ENCODE measurements at regions of chr5 and their contacts with region 1.

Region 1: GRCh38 chr5:96934708-96935558 is 947 bp upstream of the LNPEP start:
- DNase-seq: peak; percentile 95 to 98
- H3K4me3 ChIP-seq: peak overlapping the region; percentile 90
- H3K4me3 Mint-ChIP-seq: peak overlapping the region; percentile 97
- H3K27ac Mint-ChIP-seq: peak overlapping the region; percentile 97
- H3K4me1 ChIP-seq: peaks cover 13% of the 10 kb centered on the region; the same call in 1 of the 2 replicates
- H3K4me1 Mint-ChIP-seq: peaks cover 24% of the 10 kb centered on the region
- H3K27me3 ChIP-seq: no peaks in the 10 kb centered on the region
- H3K27me3 Mint-ChIP-seq: no peaks in the 10 kb centered on the region
- CTCF ChIP-seq: no peak

Region 2: GRCh38 chr5:95730730-95731570 is 1204.0 kb before region 1 on chr5 and contains the start of gene RHOBTB3:
- CTCF ChIA-PET with region 1: no interaction called
- POLR2A ChIA-PET with region 1: interaction called, 12 read pairs
- intact Hi-C with region 1: no loop called
- DNase-seq: peak; percentile 90 to 94
- H3K4me3 ChIP-seq: peak within 1 kb of the TSS; percentile 97
- H3K4me3 Mint-ChIP-seq: peak within 1 kb of the TSS; percentile 96
- H3K27ac Mint-ChIP-seq: peak within 1 kb of the TSS; percentile 94
- H3K4me1 ChIP-seq: peaks cover 55% of the 10 kb centered on the region
- H3K4me1 Mint-ChIP-seq: peaks cover 38% of the 10 kb centered on the region
- H3K27me3 ChIP-seq: no peaks in the 10 kb centered on the region
- H3K27me3 Mint-ChIP-seq: no peaks in the 10 kb centered on the region
- CTCF ChIP-seq: peak in 1 of 2 experiments; percentile 3
- total RNA-seq, gene RHOBTB3: 85.6 and 88.5 TPM in 2 replicates

Region 3: GRCh38 chr5:96752341-96753016 is 182.5 kb before region 1 on chr5:
- CTCF ChIA-PET with region 1: interaction called, 3 read pairs
- POLR2A ChIA-PET with region 1: no interaction called
- intact Hi-C with region 1: loop called (anchors 1 kb)
- DNase-seq: peak in 1 of 2 experiments; percentile 71
- H3K4me3 ChIP-seq: no peak overlapping the region
- H3K4me3 Mint-ChIP-seq: no peak overlapping the region
- H3K27ac Mint-ChIP-seq: no peak overlapping the region
- H3K4me1 ChIP-seq: no peaks in the 10 kb centered on the region
- H3K4me1 Mint-ChIP-seq: no peaks in the 10 kb centered on the region
- H3K27me3 ChIP-seq: no peaks in the 10 kb centered on the region
- H3K27me3 Mint-ChIP-seq: no peaks in the 10 kb centered on the region
- CTCF ChIP-seq: peak; percentile 61 to 70

Region 4: DNA sequence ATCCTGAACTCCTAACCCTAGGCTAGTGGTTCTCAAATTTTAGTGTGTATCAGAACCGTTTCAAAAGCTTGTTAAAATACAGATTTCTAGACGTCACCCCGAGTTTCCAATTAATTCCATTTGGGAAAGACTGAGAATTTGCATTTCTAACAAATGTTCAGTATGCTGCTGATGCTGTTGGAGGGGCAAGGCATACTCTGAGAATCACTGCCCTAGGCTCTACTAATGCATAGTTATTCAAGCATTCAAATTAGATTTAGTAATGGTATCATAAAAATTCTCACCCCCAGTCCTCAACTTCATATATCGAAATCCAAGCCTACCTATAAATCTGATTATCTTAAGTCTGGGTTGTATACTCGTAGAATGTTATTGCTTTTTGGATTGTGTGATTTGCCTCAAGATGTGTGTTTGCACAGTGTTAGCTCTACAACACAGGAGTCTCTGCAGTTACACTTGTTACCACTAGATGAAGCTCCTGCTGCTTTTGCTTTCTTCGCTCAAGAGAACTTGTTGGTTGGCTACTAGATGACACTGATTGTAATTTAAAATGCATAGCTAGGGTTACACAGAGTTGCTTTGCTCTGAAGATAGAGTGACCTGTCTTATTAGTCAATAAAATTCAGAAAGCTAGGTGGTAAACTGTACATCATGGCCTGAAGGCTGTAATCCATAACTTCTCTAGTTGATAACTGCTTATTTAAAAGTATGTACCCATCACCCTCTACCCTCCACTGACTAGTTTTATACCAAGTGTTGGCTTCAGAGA is 66.1 kb before region 1 on chr5:
- CTCF ChIA-PET with region 1: interaction called, 8 read pairs
- POLR2A ChIA-PET with region 1: no interaction called
- intact Hi-C with region 1: loop called (anchors 1 kb)
- DNase-seq: peak in 1 of 2 experiments; percentile 59
- H3K4me3 ChIP-seq: no peak overlapping the region
- H3K4me3 Mint-ChIP-seq: no peak overlapping the region
- H3K27ac Mint-ChIP-seq: no peak overlapping the region
- H3K4me1 ChIP-seq: peaks cover 4% of the 10 kb centered on the region; the same call in 1 of the 2 replicates
- H3K4me1 Mint-ChIP-seq: peaks cover 3% of the 10 kb centered on the region
- H3K27me3 ChIP-seq: no peaks in the 10 kb centered on the region
- H3K27me3 Mint-ChIP-seq: no peaks in the 10 kb centered on the region
- CTCF ChIP-seq: peak; percentile 91 to 96

Region 5: DNA sequence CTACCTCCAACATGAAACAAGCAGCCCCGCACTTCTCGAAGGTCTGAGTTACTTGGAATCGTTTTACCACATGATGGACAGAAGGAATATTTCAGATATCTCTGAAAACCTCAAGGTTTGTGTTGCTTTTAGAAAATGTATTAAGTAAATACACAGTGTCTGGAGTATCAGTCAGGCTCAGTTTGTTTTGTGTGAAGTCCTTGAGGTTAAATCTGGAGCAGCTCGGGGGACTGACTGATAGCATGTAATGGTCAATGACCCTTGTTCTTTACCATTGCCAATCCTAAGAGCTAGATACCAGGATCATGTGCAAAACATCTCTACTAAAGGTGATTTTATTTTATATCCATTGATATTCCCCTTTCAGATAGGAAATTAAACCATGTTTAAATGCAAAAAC is 25.9 kb before region 1 on chr5:
- CTCF ChIA-PET with region 1: no interaction called
- POLR2A ChIA-PET with region 1: no interaction called
- intact Hi-C with region 1: loop called (anchors 2 kb)
- DNase-seq: no peak
- H3K4me3 ChIP-seq: no peak overlapping the region
- H3K4me3 Mint-ChIP-seq: no peak overlapping the region
- H3K27ac Mint-ChIP-seq: no peak overlapping the region
- H3K4me1 ChIP-seq: peaks cover 18% of the 10 kb centered on the region; the same call in 1 of the 2 replicates
- H3K4me1 Mint-ChIP-seq: peaks cover 7% of the 10 kb centered on the region
- H3K27me3 ChIP-seq: no peaks in the 10 kb centered on the region
- H3K27me3 Mint-ChIP-seq: no peaks in the 10 kb centered on the region
- CTCF ChIP-seq: no peak

Region 6: GRCh38 chr5:96963267-96963666 is 28.3 kb after region 1 on chr5:
- CTCF ChIA-PET with region 1: no interaction called
- POLR2A ChIA-PET with region 1: no interaction called
- intact Hi-C with region 1: no loop called
- DNase-seq: no peak
- H3K4me3 ChIP-seq: no peak overlapping the region
- H3K4me3 Mint-ChIP-seq: no peak overlapping the region
- H3K27ac Mint-ChIP-seq: no peak overlapping the region
- H3K4me1 ChIP-seq: peaks cover 10% of the 10 kb centered on the region; the same call in 1 of the 2 replicates
- H3K4me1 Mint-ChIP-seq: peaks cover 7% of the 10 kb centered on the region
- H3K27me3 ChIP-seq: no peaks in the 10 kb centered on the region
- H3K27me3 Mint-ChIP-seq: no peaks in the 10 kb centered on the region
- CTCF ChIP-seq: no peak

Region 7: DNA sequence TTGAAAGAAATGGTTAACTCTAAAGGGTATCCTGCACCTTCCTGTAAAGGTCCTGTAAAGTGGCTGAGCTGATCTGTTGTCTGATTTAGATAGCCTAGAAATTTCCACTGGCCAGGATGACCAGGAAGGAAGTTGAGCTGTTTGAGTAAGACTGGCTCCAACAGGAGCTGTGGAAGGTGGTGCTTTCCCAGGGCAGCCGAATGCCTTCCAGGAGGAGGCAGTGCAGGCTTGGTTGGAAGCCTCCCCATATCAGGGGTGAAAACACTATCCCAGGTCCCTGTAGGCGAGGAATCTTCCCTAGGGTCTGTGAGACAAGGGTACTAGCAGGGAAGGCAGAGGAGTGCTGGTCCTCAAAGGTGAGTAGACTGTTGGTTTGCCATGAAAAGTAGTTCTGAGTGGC is 109.1 kb after region 1 on chr5:
- CTCF ChIA-PET with region 1: no interaction called
- POLR2A ChIA-PET with region 1: no interaction called
- intact Hi-C with region 1: loop called (anchors 2 kb)
- DNase-seq: peak; percentile 62 to 67
- H3K4me3 ChIP-seq: no peak overlapping the region
- H3K4me3 Mint-ChIP-seq: no peak overlapping the region
- H3K27ac Mint-ChIP-seq: peak overlapping the region; percentile 90
- H3K4me1 ChIP-seq: peaks cover 28% of the 10 kb centered on the region
- H3K4me1 Mint-ChIP-seq: peaks cover 37% of the 10 kb centered on the region
- H3K27me3 ChIP-seq: no peaks in the 10 kb centered on the region
- H3K27me3 Mint-ChIP-seq: no peaks in the 10 kb centered on the region
- CTCF ChIP-seq: peak; percentile 38 to 60

Region 8: DNA sequence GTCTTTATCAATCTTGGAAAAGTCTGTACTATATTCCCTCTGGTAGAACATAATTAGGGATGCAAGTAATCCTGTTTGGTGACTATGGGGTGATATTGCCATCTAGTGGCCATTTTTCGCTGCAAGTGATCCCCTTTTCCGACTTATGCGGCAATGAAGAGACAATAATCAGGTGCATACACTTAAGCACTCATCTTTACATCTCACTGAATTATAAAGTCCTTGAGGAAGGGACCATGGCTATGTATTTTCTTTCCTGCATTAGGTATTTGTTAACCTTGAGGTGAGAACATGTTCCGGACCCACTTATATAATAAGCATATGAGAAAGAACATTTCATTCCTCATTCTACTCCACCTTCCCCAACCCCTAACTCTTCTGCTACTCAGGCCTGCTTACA is 227.1 kb after region 1 on chr5:
- CTCF ChIA-PET with region 1: no interaction called
- POLR2A ChIA-PET with region 1: no interaction called
- intact Hi-C with region 1: loop called (anchors 1 kb)
- DNase-seq: peak; percentile 70 to 78
- H3K4me3 ChIP-seq: no peak overlapping the region
- H3K4me3 Mint-ChIP-seq: no peak overlapping the region
- H3K27ac Mint-ChIP-seq: no peak overlapping the region
- H3K4me1 ChIP-seq: peaks cover 14% of the 10 kb centered on the region
- H3K4me1 Mint-ChIP-seq: peaks cover 5% of the 10 kb centered on the region
- H3K27me3 ChIP-seq: no peaks in the 10 kb centered on the region
- H3K27me3 Mint-ChIP-seq: no peaks in the 10 kb centered on the region
- CTCF ChIP-seq: peak; percentile 85 to 89

Measured in Caco-2 (cell line).